ENCODE measurements at regions of chr1 and their contacts with region 1.

Region 1: DNA sequence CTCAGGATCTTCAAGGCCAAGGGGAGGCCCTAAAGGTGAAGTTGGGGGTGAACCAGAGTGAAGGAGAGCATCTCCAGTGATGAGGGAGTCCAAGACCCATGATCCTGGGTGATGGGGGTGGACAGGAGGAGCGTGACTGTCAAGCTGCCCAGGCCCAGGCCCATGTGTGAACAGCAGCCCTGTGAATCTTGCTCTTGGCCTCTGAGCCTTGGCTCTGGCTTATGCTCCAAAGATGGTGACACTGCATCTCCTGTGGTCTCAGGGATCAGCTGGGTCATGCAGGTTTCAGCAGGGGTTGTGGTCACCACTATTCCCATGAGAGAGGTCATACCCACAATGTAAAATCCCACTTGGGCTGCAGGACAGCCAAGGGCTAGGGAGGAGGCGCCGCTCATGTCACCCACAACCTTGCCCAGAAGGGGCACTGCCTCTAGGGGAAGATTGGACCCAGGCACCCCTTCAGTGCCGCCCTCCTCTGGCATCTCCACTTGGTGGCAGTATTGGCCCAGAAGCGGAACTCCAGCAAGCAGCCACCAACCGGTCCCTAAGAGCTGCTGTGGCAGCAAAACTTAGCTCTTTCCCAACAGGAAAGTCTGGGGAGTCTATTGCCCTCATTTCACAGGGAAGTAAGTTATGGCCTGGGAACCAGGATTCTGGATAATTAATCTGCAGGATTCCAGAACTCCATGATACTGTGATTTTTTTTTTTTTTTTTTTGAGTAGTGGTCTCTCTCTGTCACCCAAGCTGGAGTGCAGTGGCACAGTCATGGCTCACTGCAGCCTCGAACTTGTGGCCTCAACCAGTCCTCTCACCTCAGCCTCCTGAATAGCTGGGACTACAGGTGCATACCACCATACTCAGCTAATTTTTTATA is 7.5 kb upstream of the WNT3A start:
- DNase-seq: peak; percentile 53 to 83
- H3K4me3 ChIP-seq: no peak overlapping the region
- H3K27ac ChIP-seq: no peak overlapping the region
- H3K4me1 ChIP-seq: peaks cover 0 to 4% (median under 1%) of the 10 kb centered on the region in 4 experiments; a peak in 2 of 7 replicates
- H3K27me3 ChIP-seq: peaks cover 3 to 47% (median 22%) of the 10 kb centered on the region in 4 experiments
- CTCF ChIP-seq: peak in 2 of 3 experiments; percentile 98 to 99; a peak in 3 of 4 replicates
- EP300 ChIP-seq: no peak
- POLR2A ChIP-seq: no peak
- RAD21 ChIP-seq: peak; percentile 97 to 99

Region 2: GRCh38 chr1:227465256-227465655 is 534.0 kb before region 1 on chr1:
- CTCF ChIA-PET with region 1: no interaction called
- POLR2A ChIA-PET with region 1: no interaction called
- DNase-seq: peak in 1 of 2 experiments; percentile 69
- H3K4me3 ChIP-seq: no peak overlapping the region
- H3K27ac ChIP-seq: no peak overlapping the region
- H3K4me1 ChIP-seq: no peaks in the 10 kb centered on the region
- H3K27me3 ChIP-seq: no peaks in the 10 kb centered on the region
- CTCF ChIP-seq: peak; percentile 60 to 72 (median 69)
- EP300 ChIP-seq: no peak
- POLR2A ChIP-seq: no peak
- RAD21 ChIP-seq: peak; percentile 41 to 61

Region 3: DNA sequence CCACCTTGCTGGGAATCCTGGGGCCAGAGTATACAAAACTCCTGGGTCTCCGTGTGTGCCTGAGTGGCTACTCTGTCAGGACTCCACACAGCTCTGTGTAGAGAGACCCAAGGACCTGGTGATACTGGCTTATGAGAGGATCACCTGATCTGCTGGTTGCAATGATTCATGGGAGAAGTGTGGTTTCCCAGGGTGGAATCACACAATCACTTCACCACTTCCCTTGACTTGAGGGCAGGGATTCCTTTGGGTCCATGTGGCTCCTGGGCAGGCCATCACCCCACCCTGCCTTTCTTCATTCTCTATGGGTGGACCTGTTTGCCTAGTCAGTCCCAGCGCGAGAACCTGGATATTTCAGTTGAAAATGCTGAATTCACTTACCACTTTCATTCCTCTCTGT is 170.5 kb before region 1 on chr1:
- CTCF ChIA-PET with region 1: no interaction called
- POLR2A ChIA-PET with region 1: no interaction called
- DNase-seq: no peak
- H3K4me3 ChIP-seq: no peak overlapping the region
- H3K27ac ChIP-seq: no peak overlapping the region
- H3K4me1 ChIP-seq: no peaks in the 10 kb centered on the region
- H3K27me3 ChIP-seq: no peaks in the 10 kb centered on the region
- CTCF ChIP-seq: no peak
- EP300 ChIP-seq: no peak
- POLR2A ChIP-seq: no peak
- RAD21 ChIP-seq: no peak

Region 4: DNA sequence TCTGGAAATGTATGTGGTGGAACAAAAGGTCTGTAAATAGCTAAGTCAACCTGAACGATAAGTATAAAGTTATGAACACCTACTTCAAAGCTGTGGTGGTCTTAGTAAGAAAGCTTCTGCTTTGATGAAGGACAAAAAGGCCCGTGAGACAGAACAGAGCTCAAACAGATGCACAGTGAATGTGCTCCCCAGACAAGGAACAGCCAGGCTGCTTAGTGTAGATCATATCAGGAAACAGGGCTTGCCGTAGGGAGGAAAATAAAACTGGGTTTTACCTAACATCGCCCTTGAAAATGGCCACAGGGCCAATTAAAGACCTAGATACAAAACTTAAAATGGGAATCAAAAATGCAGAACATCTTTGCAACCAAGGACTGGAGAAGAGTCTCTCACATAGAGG is 143.6 kb before region 1 on chr1:
- CTCF ChIA-PET with region 1: no interaction called
- POLR2A ChIA-PET with region 1: no interaction called
- DNase-seq: no peak
- H3K4me3 ChIP-seq: no peak overlapping the region
- H3K27ac ChIP-seq: no peak overlapping the region
- H3K4me1 ChIP-seq: no peaks in the 10 kb centered on the region
- H3K27me3 ChIP-seq: no peaks in the 10 kb centered on the region
- CTCF ChIP-seq: no peak
- EP300 ChIP-seq: no peak
- POLR2A ChIP-seq: no peak
- RAD21 ChIP-seq: no peak

Region 5: GRCh38 chr1:228013935-228014930 is 14.9 kb after region 1 on chr1:
- CTCF ChIA-PET with region 1: interaction called, 64 read pairs
- POLR2A ChIA-PET with region 1: no interaction called
- DNase-seq: no peak
- H3K4me3 ChIP-seq: no peak overlapping the region
- H3K27ac ChIP-seq: no peak overlapping the region
- H3K4me1 ChIP-seq: no peaks in the 10 kb centered on the region; a peak in 2 of 7 replicates
- H3K27me3 ChIP-seq: peaks cover 17 to 53% (median 47%) of the 10 kb centered on the region in 4 experiments
- CTCF ChIP-seq: no peak
- EP300 ChIP-seq: no peak
- POLR2A ChIP-seq: no peak
- RAD21 ChIP-seq: no peak

Region 6: GRCh38 chr1:228059634-228060457 is 60.6 kb after region 1 on chr1:
- CTCF ChIA-PET with region 1: interaction called, 197 read pairs
- POLR2A ChIA-PET with region 1: no interaction called
- DNase-seq: peak; percentile 88 to 100
- H3K4me3 ChIP-seq: peak overlapping the region; percentile 50 to 75 (median 69)
- H3K27ac ChIP-seq: no peak overlapping the region; the same call in 1 of the 2 replicates
- H3K4me1 ChIP-seq: peaks cover 0 to 7% (median 2%) of the 10 kb centered on the region in 4 experiments; a peak in 3 of 7 replicates
- H3K27me3 ChIP-seq: peaks cover 19 to 78% (median 65%) of the 10 kb centered on the region in 4 experiments
- CTCF ChIP-seq: no peak
- EP300 ChIP-seq: no peak
- POLR2A ChIP-seq: no peak
- RAD21 ChIP-seq: no peak

Region 7: GRCh38 chr1:228073857-228074545 is 74.7 kb after region 1 on chr1:
- CTCF ChIA-PET with region 1: interaction called, 115 read pairs
- POLR2A ChIA-PET with region 1: interaction called, 5 read pairs
- DNase-seq: peak in 1 of 2 experiments; percentile 74
- H3K4me3 ChIP-seq: no peak overlapping the region
- H3K27ac ChIP-seq: no peak overlapping the region
- H3K4me1 ChIP-seq: peaks cover 0 to 14% (median 0%) of the 10 kb centered on the region in 4 experiments; a peak in 4 of 7 replicates
- H3K27me3 ChIP-seq: peaks cover 20 to 84% (median 81%) of the 10 kb centered on the region in 4 experiments
- CTCF ChIP-seq: peak; percentile 59 to 72 (median 66)
- EP300 ChIP-seq: no peak
- POLR2A ChIP-seq: no peak
- RAD21 ChIP-seq: peak; percentile 82

Region 8: DNA sequence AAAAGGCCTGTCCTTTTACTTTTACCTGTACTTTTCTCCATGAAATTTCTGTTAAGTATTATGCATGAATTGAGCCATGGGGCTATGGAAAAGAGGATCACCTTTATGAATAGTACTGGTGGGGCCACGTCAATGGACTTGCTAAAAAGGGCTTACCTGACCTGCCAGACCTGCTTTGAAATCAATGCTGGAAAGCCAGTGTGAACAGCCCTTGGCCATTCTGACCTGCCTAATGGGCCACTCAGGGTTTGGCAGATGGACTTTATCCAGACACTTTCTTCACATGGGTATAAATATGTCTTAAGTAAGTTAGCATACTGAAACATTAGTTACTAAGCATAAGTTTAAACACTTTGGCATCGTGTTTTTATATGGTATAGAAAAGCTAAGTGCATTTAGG is 132.5 kb after region 1 on chr1:
- CTCF ChIA-PET with region 1: interaction called, 18 read pairs
- POLR2A ChIA-PET with region 1: no interaction called
- DNase-seq: no peak
- H3K4me3 ChIP-seq: no peak overlapping the region
- H3K27ac ChIP-seq: no peak overlapping the region
- H3K4me1 ChIP-seq: no peaks in the 10 kb centered on the region; a peak in 1 of 7 replicates
- H3K27me3 ChIP-seq: peaks cover 0 to 21% (median 7%) of the 10 kb centered on the region in 4 experiments; a peak in 6 of 7 replicates
- CTCF ChIP-seq: no peak
- EP300 ChIP-seq: no peak
- POLR2A ChIP-seq: no peak
- RAD21 ChIP-seq: no peak

Measured in H1 (cell line).